Naive thymus-derived CD4-positive, alpha-beta T cell (primary cell): ENCODE measurements at regions of chr16 and their contacts with region 1.

Region 1: DNA sequence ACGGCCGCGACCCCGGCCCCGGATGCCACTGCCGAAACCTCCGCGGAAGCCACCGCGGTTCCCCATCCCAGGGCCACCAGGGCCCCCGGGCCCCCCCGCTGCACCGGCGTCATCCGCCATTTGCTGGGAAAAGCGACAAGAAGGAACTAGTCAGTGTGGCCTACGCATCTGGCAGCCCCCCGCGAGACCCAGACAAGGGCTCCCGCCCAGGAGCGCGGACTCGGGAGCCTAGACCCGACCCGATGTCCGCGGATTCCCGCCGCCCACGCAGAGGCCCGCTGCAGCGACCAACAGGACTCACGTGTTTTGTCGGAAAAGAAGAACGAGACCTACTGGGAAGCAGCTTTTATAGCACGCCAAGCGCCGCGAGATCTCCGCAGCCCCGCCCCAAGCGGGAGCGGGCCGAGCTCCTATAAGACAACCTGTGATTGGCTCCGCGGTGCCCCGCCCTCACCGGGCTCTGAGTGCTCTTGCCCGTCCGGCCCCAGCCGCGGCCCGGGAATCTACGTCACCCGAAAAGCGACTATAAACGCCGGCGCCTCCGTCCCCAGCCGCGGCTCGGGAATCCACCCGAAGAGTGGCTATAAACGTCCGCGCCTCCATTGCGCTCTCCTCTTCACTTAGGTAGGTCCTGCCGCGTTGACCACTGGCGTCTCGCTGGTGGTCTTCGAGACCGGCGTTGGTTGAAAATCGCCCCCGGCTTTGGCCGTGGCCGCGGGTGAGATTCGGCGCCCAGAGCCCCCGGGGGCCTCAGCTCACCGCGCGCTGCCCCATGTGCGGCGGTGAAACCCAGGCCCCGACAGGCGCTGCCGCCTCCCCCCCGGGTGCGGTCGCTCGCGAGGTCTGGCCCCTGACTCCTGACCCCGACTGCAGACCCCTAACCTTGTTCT is at the start of gene RPS2:
- DNase-seq: peak; percentile 94 to 99 (median 97)
- ATAC-seq: peak; percentile 97
- H3K4me3 ChIP-seq: peak within 1 kb of the TSS; percentile 81
- H3K4me3 Mint-ChIP-seq: peak within 1 kb of the TSS; percentile 89 to 97 (median 94)
- H3K27ac ChIP-seq: peak within 1 kb of the TSS; percentile 100
- H3K27ac Mint-ChIP-seq: peak within 1 kb of the TSS; percentile 95 to 98 (median 97)
- H3K4me1 ChIP-seq: peaks cover 25 to 41% of the 10 kb centered on the region in 2 donors
- H3K4me1 Mint-ChIP-seq: peaks cover 21 to 49% (median 32%) of the 10 kb centered on the region in 7 donors
- H3K27me3 ChIP-seq: no peaks in the 10 kb centered on the region
- H3K27me3 Mint-ChIP-seq: no peaks in the 10 kb centered on the region
- total RNA-seq, gene RPS2: 2,562 to 3,376 (median 2,918) TPM

Region 2: GRCh38 chr16:684067-684794 is 1280.5 kb before region 1 on chr16 and contains the start of gene JMJD8:
- CTCF ChIA-PET with region 1: no interaction called
- POLR2A ChIA-PET with region 1: no interaction called
- intact Hi-C with region 1: loop called in 1 of 2 experiments (anchors 2 kb)
- DNase-seq: peak; percentile 88 to 97 (median 91)
- ATAC-seq: peak; percentile 75
- H3K4me3 ChIP-seq: peak within 1 kb of the TSS; percentile 52
- H3K4me3 Mint-ChIP-seq: peak within 1 kb of the TSS; percentile 58 to 87 (median 76)
- H3K27ac ChIP-seq: peak within 1 kb of the TSS; percentile 78
- H3K27ac Mint-ChIP-seq: peak within 1 kb of the TSS in 6 of 9 donors; percentile 38 to 82 (median 58)
- H3K4me1 ChIP-seq: peaks cover 9 to 36% of the 10 kb centered on the region in 2 donors
- H3K4me1 Mint-ChIP-seq: peaks cover 10 to 31% (median 22%) of the 10 kb centered on the region in 7 donors
- H3K27me3 ChIP-seq: no peaks in the 10 kb centered on the region
- H3K27me3 Mint-ChIP-seq: no peaks in the 10 kb centered on the region
- total RNA-seq, gene JMJD8: 26.8 to 48.1 (median 37.2) TPM

Region 3: DNA sequence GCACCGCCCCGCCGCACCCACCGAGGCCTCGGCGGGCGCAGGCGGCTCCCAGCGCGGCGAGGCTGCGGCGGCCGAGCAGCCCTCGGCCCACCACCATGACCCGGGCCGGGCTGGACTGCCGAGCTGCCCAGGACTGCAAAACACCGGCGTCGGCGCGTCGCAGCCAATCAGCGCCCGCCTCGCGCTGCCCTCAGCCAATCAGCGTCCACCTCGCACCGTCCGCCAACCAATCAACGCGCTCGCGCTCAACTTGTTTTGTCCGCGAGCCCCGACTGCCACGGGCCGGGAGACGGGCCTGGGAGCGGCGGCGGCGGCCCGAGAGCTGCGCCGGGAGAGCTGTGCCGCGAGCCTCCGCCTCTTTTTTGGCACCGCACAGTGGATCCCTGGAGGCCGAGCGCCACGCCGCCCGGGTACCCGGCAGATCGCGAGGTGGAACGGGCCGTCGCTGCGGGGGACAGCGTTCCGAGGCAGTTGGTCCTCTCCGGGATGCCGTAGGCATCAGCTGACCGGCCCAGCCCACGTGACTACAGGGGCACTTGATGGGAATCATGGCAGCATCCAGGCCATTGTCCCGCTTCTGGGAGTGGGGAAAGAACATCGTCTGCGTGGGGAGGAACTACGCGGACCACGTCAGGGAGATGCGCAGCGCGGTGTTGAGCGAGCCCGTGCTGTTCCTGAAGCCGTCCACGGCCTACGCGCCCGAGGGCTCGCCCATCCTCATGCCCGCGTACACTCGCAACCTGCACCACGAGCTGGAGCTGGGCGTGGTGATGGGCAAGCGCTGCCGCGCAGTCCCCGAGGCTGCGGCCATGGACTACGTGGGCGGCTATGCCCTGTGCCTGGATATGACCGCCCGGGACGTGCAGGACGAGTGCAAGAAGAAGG is 137.8 kb before region 1 on chr16 and contains the starts of genes FAHD1 and HAGH:
- CTCF ChIA-PET with region 1: no interaction called
- POLR2A ChIA-PET with region 1: interaction called, 6 read pairs
- intact Hi-C with region 1: loop called in 1 of 2 experiments (anchors 1 kb)
- DNase-seq: peak; percentile 83 to 98 (median 92)
- ATAC-seq: peak; percentile 91
- H3K4me3 ChIP-seq: peak within 1 kb of the TSS; percentile 99
- H3K4me3 Mint-ChIP-seq: peak within 1 kb of the TSS; percentile 82 to 98 (median 93)
- H3K27ac ChIP-seq: peak within 1 kb of the TSS; percentile 78
- H3K27ac Mint-ChIP-seq: peak within 1 kb of the TSS; percentile 85 to 94 (median 91)
- H3K4me1 ChIP-seq: peaks cover 19 to 26% of the 10 kb centered on the region in 2 donors
- H3K4me1 Mint-ChIP-seq: peaks cover 21 to 62% (median 44%) of the 10 kb centered on the region in 7 donors
- H3K27me3 ChIP-seq: no peaks in the 10 kb centered on the region
- H3K27me3 Mint-ChIP-seq: no peaks in the 10 kb centered on the region
- total RNA-seq, gene FAHD1: 7.8 to 12.9 (median 9.7) TPM
- total RNA-seq, gene HAGH: 46.2 to 72.9 (median 48.9) TPM

Region 4: GRCh38 chr16:1942810-1943726 is 21.7 kb before region 1 on chr16 and contains the start of gene MSRB1:
- CTCF ChIA-PET with region 1: interaction called, 4 read pairs
- POLR2A ChIA-PET with region 1: interaction called, 52 read pairs
- intact Hi-C with region 1: loop called (anchors 1 kb)
- DNase-seq: peak; percentile 97 to 100 (median 98)
- ATAC-seq: peak; percentile 100
- H3K4me3 ChIP-seq: peak within 1 kb of the TSS; percentile 90
- H3K4me3 Mint-ChIP-seq: peak within 1 kb of the TSS; percentile 74 to 90 (median 87)
- H3K27ac ChIP-seq: peak within 1 kb of the TSS; percentile 76
- H3K27ac Mint-ChIP-seq: peak within 1 kb of the TSS; percentile 41 to 90 (median 65)
- H3K4me1 ChIP-seq: peaks cover 6 to 7% of the 10 kb centered on the region in 2 donors
- H3K4me1 Mint-ChIP-seq: peaks cover 4 to 24% (median 11%) of the 10 kb centered on the region in 7 donors
- H3K27me3 ChIP-seq: no peaks in the 10 kb centered on the region
- H3K27me3 Mint-ChIP-seq: no peaks in the 10 kb centered on the region
- total RNA-seq, gene MSRB1: 5.5 to 27.0 (median 8.2) TPM

Region 5: GRCh38 chr16:1991948-1992703 is 27.4 kb after region 1 on chr16:
- CTCF ChIA-PET with region 1: no interaction called
- POLR2A ChIA-PET with region 1: interaction called, 61 read pairs
- intact Hi-C with region 1: loop called (anchors 1 to 2 kb)
- DNase-seq: peak; percentile 85 to 98 (median 92)
- ATAC-seq: peak; percentile 95
- H3K4me3 ChIP-seq: peak overlapping the region; percentile 39
- H3K4me3 Mint-ChIP-seq: peak overlapping the region in 9 of 10 donors; percentile 45 to 82 (median 75)
- H3K27ac ChIP-seq: peak overlapping the region; percentile 54
- H3K27ac Mint-ChIP-seq: peak overlapping the region in 7 of 9 donors; percentile 22 to 82 (median 62)
- H3K4me1 ChIP-seq: peaks cover 15 to 16% of the 10 kb centered on the region in 2 donors
- H3K4me1 Mint-ChIP-seq: peaks cover 5 to 33% (median 22%) of the 10 kb centered on the region in 7 donors
- H3K27me3 ChIP-seq: peaks cover 0 to 3% of the 10 kb centered on the region in 2 donors
- H3K27me3 Mint-ChIP-seq: peaks cover 8 to 14% (median 10%) of the 10 kb centered on the region in 5 donors

Region 6: GRCh38 chr16:2047330-2048115 is 82.8 kb after region 1 on chr16 and contains the starts of genes NTHL1 and TSC2:
- CTCF ChIA-PET with region 1: no interaction called
- POLR2A ChIA-PET with region 1: interaction called, 5 read pairs
- intact Hi-C with region 1: loop called in 1 of 2 experiments (anchors 1 kb)
- DNase-seq: peak; percentile 81 to 95 (median 87)
- ATAC-seq: peak; percentile 98
- H3K4me3 ChIP-seq: peak within 1 kb of the TSS; percentile 72
- H3K4me3 Mint-ChIP-seq: peak within 1 kb of the TSS; percentile 82 to 97 (median 93)
- H3K27ac ChIP-seq: peak within 1 kb of the TSS; percentile 82
- H3K27ac Mint-ChIP-seq: peak within 1 kb of the TSS in 8 of 9 donors; percentile 57 to 91 (median 82)
- H3K4me1 ChIP-seq: peaks cover 6 to 12% of the 10 kb centered on the region in 2 donors
- H3K4me1 Mint-ChIP-seq: peaks cover 16 to 23% (median 19%) of the 10 kb centered on the region in 7 donors
- H3K27me3 ChIP-seq: no peaks in the 10 kb centered on the region
- H3K27me3 Mint-ChIP-seq: no peaks in the 10 kb centered on the region
- total RNA-seq, gene NTHL1: 4.4 to 27.0 (median 7.5) TPM
- total RNA-seq, gene TSC2: 126 to 155 (median 147) TPM

Region 7: DNA sequence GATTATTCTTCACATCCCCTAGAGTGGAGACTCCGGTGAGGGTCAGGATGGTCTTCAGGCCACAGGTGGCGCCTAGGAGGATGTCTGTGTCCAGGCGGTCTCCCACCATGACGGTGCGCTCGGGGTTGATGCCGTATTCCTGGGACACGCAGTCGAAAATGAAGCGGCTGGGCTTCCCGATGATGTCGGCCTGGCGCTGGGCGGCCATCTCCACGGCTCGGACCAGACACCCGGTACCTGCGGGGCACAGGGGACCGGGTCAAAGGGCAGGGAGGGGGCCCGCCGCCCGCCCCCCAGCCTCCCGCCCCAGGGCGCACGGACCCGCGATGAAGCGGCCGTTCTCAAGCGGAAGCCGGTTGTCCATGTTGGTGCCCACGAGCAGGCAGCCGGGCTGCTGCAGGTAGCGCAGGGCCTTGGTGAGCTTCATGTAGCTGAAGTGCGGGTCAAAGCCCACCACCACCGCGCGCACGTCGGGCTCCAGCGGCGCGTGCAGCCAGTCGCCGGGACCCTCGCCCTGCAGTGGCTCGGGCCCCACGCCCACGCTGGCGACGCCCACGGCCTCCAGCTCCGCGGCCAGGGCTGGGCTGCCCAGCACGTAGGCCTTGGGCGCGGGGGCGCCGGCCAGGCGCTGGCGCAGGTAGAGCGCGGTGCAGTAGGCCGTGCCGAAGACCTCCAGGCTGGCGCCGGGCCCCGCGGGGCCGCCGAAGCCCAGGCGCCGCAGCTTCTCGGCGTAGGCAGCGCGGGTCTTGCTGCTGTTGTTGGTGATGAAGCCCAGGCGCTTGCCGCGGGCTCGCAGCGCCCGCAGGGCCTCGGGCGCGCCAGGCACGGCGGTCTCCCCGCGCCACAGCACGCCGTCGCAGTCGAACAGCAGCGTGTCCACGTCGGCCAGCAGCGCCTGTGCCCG is 249.3 kb after region 1 on chr16:
- CTCF ChIA-PET with region 1: no interaction called
- POLR2A ChIA-PET with region 1: interaction called, 5 read pairs
- intact Hi-C with region 1: loop called in 1 of 2 experiments (anchors 2 kb)
- DNase-seq: peak in 1 of 9 donors; percentile 60
- ATAC-seq: no peak
- H3K4me3 ChIP-seq: peak overlapping the region; percentile 65
- H3K4me3 Mint-ChIP-seq: peak overlapping the region; percentile 65 to 88 (median 79)
- H3K27ac ChIP-seq: peak overlapping the region; percentile 73
- H3K27ac Mint-ChIP-seq: peak overlapping the region in 3 of 9 donors; percentile 68 to 79 (median 71)
- H3K4me1 ChIP-seq: peaks cover 14 to 16% of the 10 kb centered on the region in 2 donors
- H3K4me1 Mint-ChIP-seq: peaks cover 11 to 21% (median 17%) of the 10 kb centered on the region in 7 donors
- H3K27me3 ChIP-seq: no peaks in the 10 kb centered on the region
- H3K27me3 Mint-ChIP-seq: no peaks in the 10 kb centered on the region